ENCODE measurements at regions of chr6 and their contacts with region 1.

Region 1: DNA sequence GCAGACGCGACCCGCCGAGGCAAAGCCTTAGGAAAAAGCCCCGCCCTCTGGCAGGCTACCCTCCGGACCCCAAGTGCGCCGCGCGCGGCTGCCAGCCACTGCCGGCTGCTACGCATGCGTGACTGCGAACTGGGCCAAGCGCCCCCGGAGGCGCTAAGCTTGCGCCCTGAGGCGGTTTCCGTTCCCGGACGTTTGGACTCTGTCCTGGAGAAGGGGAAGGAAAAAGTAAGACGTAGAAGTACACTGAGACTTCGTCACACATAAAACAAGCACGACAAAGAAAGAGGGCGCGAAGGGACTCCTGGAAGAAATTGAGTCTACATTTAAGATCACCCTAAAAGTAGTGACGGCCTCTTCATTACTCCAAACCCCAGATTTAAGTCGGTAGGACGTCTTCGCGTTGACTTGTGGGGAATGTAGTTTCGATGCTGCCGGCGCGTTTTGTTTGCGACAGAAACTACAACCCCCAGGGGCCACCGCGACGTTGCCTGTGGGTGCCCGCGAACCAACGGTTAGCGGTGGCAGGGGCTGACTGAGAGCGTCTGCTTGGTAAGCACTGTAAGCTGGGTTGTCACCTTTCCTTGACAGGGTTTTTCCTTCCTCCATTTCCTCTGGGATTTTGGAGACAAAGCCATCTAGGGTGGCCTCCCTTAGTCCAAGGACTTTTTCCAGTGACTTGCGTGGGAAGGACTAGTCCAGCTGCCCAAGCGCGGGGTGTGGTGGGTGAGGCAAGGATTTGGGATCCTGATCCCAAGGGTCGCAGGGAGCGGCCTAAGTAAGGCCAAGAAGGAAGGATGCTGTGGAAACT is at the start of gene CEP57L1:
- DNase-seq: peak; percentile 97
- H3K4me3 Mint-ChIP-seq: peak within 1 kb of the TSS; percentile 84
- H3K27ac Mint-ChIP-seq: peak within 1 kb of the TSS; percentile 95
- H3K4me1 Mint-ChIP-seq: peaks cover 38% of the 10 kb centered on the region
- H3K27me3 Mint-ChIP-seq: no peaks in the 10 kb centered on the region
- total RNA-seq, gene CEP57L1: 33.3 to 33.5 TPM

Region 2: DNA sequence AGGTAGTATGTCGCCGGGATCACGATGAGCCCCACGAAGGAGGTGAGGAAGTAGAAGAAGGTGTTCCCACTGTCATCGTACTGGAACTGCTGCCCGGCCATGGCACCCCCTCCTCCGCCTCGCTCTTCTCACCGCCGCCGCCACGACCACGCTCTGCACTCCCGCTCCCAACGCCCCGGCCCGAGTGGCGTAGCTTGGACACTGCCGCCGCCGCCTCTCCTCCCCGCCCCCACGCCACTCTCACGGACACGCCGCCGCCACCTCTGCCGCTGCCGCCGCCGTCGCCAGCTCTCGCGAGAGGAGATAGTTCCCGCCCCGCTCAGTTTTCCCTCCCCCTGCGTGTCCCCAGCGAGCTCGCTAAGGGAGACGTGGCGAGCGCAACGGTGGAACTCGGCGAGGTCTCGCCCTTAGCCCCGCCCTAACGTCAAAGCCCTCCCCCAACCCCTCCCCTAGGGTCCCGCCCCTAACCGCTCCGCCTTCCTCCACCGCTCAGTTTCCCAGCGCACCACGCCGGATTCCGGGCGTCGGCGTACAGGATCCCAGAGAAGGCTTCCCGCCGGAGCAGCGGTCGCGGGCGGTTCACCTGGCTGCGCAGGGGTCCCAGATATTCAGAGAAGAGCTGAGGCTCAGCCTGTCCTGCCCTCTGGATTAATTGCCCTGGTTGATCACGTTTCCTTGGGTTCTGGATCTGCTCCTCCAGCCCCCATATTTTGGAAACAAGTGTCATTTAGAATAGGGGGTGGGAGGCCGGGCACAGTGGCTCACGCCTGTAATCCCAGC is 1137.1 kb before region 1 on chr6 and contains the start of gene SEC63:
- CTCF ChIA-PET with region 1: no interaction called
- intact Hi-C with region 1: loop called (anchors 1 kb)
- DNase-seq: peak; percentile 98
- H3K4me3 Mint-ChIP-seq: peak within 1 kb of the TSS; percentile 97
- H3K27ac Mint-ChIP-seq: peak within 1 kb of the TSS; percentile 94
- H3K4me1 Mint-ChIP-seq: peaks cover 32% of the 10 kb centered on the region
- H3K27me3 Mint-ChIP-seq: no peaks in the 10 kb centered on the region
- total RNA-seq, gene SEC63: 78.3 to 86.5 TPM

Region 3: DNA sequence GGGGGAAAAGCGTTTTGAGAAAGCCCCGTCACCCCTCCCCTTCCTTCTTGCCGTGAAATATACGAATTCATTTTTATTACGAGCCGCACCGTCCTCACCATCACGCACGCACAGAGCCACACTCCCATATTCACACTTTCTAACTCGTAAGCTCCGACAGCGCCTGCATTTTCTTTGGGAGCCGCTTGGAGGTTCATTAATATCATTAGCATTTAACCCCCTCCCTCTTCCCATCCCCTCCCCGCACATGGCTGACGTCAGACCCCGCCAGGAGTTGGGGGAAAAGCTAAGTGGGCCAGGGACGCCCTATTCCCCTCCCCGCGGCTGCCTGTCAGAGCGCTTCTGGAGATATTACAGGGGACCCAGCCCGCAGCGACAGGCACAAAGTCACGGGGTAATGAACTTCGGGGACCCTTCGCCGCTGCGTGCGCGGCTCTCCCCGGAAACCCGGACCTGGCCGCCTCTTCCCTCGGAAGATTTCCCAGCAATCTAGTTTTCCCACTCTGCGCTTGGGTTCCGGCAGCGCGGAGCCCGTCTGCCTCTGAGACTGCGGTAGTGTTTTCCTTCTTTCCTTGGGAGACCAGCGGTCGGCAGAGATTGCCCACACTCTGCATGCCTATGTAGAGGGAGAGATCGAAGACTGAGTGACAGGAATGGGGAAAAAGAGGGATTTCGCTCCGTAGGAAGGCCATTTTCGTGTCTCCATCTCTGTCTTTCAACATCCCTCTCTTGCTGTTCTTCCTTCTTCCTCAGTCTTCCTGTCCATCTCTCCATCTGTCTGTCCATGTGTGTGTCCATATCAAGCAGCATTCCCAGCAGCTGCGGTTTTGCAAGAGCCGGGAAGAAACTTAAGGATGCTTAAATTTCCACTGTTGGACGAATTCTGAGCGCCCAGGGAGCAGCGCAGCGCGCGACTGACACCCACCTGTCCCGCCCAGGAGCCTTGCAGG is 929.2 kb before region 1 on chr6 and contains the start of gene NR2E1:
- CTCF ChIA-PET with region 1: no interaction called
- intact Hi-C with region 1: no loop called
- DNase-seq: no peak
- H3K4me3 Mint-ChIP-seq: peak within 1 kb of the TSS; percentile 8
- H3K27ac Mint-ChIP-seq: peak within 1 kb of the TSS; percentile 39
- H3K4me1 Mint-ChIP-seq: peaks cover 44% of the 10 kb centered on the region
- H3K27me3 Mint-ChIP-seq: peaks cover 90% of the 10 kb centered on the region
- total RNA-seq, gene NR2E1: not detected

Region 4: DNA sequence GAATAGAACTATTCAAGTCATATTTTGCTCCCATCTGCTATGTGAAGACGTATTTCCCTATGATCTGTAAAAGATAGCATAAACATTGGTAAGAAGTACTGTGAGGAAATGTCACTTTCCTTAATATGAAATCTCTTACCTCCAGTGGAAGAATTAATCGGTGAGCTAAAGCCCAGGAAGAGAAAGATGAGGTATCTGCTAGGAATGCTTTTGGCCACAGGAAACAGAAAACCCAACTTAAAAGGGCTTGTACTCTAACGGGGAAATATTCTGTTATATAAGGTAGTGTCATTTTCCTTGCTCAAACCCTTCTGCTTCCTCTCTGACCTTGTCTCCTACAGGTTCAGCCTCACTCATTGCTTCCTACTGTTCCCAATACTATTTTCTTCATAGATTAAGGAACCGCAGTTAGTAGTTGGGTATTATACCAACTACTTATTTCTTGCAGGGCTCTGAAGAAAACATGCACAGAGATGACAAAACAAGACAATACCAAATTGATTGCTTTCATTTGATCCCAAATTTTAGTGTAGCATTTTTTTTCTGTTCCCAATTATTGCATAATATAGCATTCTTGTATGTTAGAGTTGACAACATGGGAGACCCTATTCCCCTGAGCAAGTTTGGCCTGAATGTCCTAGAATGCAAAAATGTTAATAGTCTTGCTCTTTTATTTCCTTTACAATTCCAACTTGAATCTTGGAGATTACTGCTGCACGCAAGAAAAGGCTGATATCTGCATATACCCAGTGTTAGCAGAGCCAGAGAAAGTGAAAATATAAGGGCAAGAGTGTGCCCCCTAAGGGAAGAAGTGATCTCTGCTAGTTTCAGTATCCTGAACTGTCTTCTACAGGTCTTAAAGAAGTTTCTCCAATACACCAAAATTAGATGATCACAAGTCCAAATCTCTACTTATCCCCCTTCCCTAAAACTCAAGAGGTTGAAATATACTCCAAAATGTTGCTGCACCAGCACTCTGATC is 735.0 kb before region 1 on chr6:
- CTCF ChIA-PET with region 1: no interaction called
- intact Hi-C with region 1: no loop called
- DNase-seq: no peak
- H3K4me3 Mint-ChIP-seq: no peak overlapping the region
- H3K27ac Mint-ChIP-seq: no peak overlapping the region
- H3K4me1 Mint-ChIP-seq: peaks cover 3% of the 10 kb centered on the region
- H3K27me3 Mint-ChIP-seq: no peaks in the 10 kb centered on the region

Region 5: DNA sequence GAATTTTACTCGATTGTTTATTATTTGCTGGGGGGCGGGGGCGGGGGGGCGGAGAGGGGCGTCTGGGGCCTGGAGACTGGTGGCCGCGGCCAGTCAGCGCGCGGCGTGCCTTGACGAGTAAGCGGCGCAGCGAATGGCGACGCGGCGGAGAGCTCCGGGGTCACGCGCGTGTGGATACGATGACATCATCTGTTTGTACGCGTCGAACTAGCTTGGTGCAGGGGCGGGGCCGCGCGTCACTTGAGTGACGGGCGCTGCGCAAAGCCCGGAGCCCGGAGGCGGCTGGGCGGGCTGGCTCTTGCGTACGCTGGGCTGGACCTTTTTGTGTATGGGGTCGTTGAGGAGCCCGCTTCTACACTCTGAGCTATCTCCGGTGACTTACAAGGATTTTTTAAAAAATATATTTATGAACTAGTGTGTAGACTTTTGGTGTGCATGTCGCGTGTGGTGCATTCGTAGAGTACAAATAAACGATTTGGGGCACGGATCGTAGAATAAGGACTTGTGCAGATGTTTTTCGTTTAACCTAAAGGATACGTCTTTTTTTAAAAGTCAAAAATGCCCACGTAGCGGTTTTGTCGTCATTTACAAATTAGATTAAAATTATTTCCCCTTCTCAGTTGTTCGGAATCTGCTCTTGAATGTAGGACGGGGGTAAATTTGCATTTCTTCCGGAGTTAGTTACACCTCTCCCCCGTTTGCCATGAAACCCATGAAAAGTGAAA is 536.7 kb before region 1 on chr6:
- CTCF ChIA-PET with region 1: no interaction called
- intact Hi-C with region 1: loop called (anchors 1 kb)
- DNase-seq: peak; percentile 97
- H3K4me3 Mint-ChIP-seq: peak overlapping the region; percentile 88
- H3K27ac Mint-ChIP-seq: peak overlapping the region; percentile 89
- H3K4me1 Mint-ChIP-seq: peaks cover 16% of the 10 kb centered on the region
- H3K27me3 Mint-ChIP-seq: peaks cover 10% of the 10 kb centered on the region

Region 6: DNA sequence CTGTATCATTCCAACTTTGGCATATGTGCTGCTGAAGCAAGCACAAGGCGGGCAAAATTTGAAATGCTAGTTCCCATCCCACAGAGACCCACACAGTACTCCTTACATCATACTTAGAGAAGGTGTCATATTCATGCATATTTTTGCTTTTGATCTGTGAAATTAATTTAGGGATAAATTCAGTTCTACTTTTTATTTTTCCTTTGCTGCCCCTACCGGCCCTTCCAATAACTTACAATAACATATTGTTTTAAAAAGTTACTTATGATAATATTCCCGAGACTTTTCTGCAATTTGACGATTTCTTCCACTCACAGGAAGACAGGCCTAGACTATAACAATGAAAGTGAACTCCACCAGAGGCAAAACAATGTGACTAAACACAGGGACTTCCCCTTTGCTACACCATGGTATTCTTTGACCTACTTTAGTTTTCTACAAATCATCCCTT is 35.6 kb before region 1 on chr6:
- CTCF ChIA-PET with region 1: no interaction called
- intact Hi-C with region 1: loop called (anchors 1 kb)
- DNase-seq: peak; percentile 19
- H3K4me3 Mint-ChIP-seq: peak overlapping the region; percentile 35
- H3K27ac Mint-ChIP-seq: peak overlapping the region; percentile 55
- H3K4me1 Mint-ChIP-seq: peaks cover 40% of the 10 kb centered on the region
- H3K27me3 Mint-ChIP-seq: no peaks in the 10 kb centered on the region

Region 7: DNA sequence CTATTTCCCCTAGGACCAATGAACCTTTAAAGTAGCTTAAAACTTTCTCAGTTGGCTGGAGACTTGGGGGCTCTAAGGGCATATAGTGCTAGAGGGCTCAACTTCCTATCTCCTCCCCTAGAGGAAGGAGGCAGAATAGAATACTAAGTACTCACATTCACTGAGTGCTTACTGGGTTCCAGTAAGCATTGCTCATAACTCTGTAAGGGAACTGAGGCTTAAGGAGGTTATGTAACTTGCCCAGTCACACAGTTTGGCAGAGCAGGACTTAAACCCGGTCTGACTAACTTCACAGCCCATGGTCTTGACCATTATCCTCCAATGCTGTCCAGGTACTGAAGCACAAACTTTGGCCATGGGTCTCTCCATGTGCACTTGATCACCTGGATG is 13.0 kb before region 1 on chr6:
- CTCF ChIA-PET with region 1: no interaction called
- intact Hi-C with region 1: no loop called
- DNase-seq: no peak
- H3K4me3 Mint-ChIP-seq: no peak overlapping the region
- H3K27ac Mint-ChIP-seq: no peak overlapping the region
- H3K4me1 Mint-ChIP-seq: peaks cover 3% of the 10 kb centered on the region
- H3K27me3 Mint-ChIP-seq: no peaks in the 10 kb centered on the region

Region 8: GRCh38 chr6:109455502-109456282 is 360.5 kb after region 1 on chr6 and contains the start of gene MICAL1:
- CTCF ChIA-PET with region 1: no interaction called
- intact Hi-C with region 1: loop called (anchors 2 kb)
- DNase-seq: peak; percentile 69
- H3K4me3 Mint-ChIP-seq: peak within 1 kb of the TSS; percentile 91
- H3K27ac Mint-ChIP-seq: peak within 1 kb of the TSS; percentile 82
- H3K4me1 Mint-ChIP-seq: peaks cover 54% of the 10 kb centered on the region
- H3K27me3 Mint-ChIP-seq: no peaks in the 10 kb centered on the region
- total RNA-seq, gene MICAL1: 20.4 to 22.9 TPM

Region 9: DNA sequence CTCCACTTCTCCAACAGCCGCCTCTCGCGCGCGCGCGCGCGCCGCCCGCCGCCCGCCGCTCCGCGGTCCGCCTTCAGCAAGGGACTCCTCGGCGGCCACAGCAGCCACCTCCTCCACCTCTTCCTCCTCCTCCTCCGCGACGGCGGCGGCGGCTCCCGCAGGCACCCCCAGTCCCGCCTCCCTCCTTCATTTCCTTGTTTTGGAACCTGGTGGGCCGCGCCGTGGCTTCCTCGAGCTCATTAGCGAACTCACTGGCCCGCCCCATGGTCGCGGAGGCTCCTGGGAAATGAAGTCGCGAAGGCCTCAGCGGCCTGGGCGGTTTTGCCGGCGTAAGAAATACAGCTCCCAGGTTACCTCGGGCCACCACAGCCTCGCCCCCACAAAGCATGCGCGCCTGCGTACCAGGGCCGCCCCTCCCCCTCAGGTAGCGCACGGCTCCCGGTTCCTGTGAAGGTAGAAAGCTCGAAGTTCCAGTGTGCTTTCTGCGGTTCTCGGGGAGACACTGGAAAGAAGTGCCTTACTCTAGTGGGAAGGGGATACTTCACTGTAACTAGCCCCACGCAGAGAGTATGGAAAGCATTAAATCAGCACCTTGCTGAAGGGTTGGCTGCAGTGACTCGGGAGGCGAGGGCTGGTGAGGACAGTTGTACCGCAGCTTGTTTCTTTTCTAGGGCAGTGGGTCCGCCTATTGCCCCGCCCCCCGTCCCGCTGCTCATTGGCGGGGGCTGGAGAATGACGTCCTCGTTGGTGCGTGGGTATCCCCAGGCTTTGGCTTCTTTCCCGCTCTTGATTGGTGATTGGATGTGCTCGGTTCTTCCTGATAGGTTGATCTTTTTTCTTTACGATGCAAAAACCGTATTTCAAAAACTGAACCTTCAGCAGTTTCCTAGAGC is 1720.2 kb after region 1 on chr6 and contains the start of gene CDK19:
- CTCF ChIA-PET with region 1: no interaction called
- intact Hi-C with region 1: loop called (anchors 5 kb)
- DNase-seq: peak; percentile 99
- H3K4me3 Mint-ChIP-seq: peak within 1 kb of the TSS; percentile 100
- H3K27ac Mint-ChIP-seq: peak within 1 kb of the TSS; percentile 95
- H3K4me1 Mint-ChIP-seq: peaks cover 19% of the 10 kb centered on the region
- H3K27me3 Mint-ChIP-seq: no peaks in the 10 kb centered on the region
- total RNA-seq, gene CDK19: 11.0 to 11.7 TPM

Measured in activated naive CD4-positive, alpha-beta T cell treated with anti-CD3 and anti-CD28 coated beads for 36 hours (primary cell).